Heart right ventricle (tissue), 16 donors: ENCODE measurements at regions of chr2 and their contacts with region 1.

Region 1: DNA sequence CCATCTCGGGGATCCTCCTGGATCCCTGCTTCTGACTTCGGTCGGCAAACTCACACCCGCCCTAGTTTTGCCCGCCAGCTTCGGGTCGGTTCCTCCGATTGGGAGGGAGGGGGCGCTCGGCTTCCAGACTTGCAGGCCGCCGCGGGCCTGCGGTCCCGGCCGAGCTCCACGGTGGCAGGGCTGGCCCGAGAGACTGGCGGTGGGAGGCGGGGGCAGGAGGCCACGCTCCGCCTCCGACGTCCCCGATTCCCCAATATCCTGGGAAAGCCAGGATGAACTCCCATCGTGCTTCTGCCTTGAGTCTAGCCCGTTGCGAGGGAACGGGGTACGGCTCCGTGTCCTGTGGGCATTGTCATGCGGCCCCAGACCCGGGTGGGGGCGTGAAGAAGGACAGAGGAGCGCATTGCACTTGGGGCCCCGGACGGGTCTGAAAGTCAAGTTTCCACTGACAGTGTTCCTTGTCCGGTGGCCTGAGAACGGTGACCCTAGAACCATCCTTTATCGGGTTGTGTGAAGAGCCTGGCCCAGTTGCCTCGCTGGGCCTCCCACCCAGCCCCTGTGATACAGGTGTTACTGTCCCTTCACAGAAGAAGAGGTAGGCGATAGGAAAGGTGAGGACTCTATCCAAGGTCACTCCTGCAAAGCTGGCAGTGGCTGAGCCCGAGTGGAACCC is 2.4 kb upstream of the INHBB start:
- DNase-seq: peak; percentile 78 to 84
- ATAC-seq: peak; percentile 82 to 95 (median 91)
- H3K4me3 ChIP-seq: peak overlapping the region in 9 of 10 donors; percentile 26 to 63 (median 50)
- H3K27ac ChIP-seq: peak overlapping the region in 3 of 10 donors; percentile 56 to 83 (median 65)
- H3K4me1 ChIP-seq: peaks cover 13 to 51% (median 36%) of the 10 kb centered on the region in 9 donors
- H3K27me3 ChIP-seq: peaks cover 12 to 90% (median 72%) of the 10 kb centered on the region in 7 donors
- CTCF ChIP-seq: peak; percentile 70 to 96 (median 85)

Region 2: GRCh38 chr2:120441744-120442471 is 98.3 kb after region 1 on chr2:
- intact Hi-C with region 1: loop called in 1 of 10 experiments (anchors 5 kb)
- DNase-seq: peak in 1 of 2 donors; percentile 37
- ATAC-seq: peak; percentile 36 to 74 (median 54)
- H3K4me3 ChIP-seq: peak overlapping the region; percentile 17 to 56 (median 38)
- H3K27ac ChIP-seq: no peak overlapping the region
- H3K4me1 ChIP-seq: peaks cover 8 to 17% (median 15%) of the 10 kb centered on the region in 9 donors
- H3K27me3 ChIP-seq: peaks cover 0 to 69% (median 51%) of the 10 kb centered on the region in 7 donors
- CTCF ChIP-seq: no peak

Region 3: GRCh38 chr2:120470041-120470965 is 126.7 kb after region 1 on chr2:
- intact Hi-C with region 1: no loop called
- DNase-seq: peak in 1 of 2 donors; percentile 69
- ATAC-seq: peak; percentile 63 to 90 (median 72)
- H3K4me3 ChIP-seq: no peak overlapping the region
- H3K27ac ChIP-seq: peak overlapping the region in 9 of 10 donors; percentile 2 to 59 (median 37)
- H3K4me1 ChIP-seq: peaks cover 5 to 44% (median 34%) of the 10 kb centered on the region in 9 donors
- H3K27me3 ChIP-seq: no peaks in the 10 kb centered on the region
- CTCF ChIP-seq: no peak

Region 4: DNA sequence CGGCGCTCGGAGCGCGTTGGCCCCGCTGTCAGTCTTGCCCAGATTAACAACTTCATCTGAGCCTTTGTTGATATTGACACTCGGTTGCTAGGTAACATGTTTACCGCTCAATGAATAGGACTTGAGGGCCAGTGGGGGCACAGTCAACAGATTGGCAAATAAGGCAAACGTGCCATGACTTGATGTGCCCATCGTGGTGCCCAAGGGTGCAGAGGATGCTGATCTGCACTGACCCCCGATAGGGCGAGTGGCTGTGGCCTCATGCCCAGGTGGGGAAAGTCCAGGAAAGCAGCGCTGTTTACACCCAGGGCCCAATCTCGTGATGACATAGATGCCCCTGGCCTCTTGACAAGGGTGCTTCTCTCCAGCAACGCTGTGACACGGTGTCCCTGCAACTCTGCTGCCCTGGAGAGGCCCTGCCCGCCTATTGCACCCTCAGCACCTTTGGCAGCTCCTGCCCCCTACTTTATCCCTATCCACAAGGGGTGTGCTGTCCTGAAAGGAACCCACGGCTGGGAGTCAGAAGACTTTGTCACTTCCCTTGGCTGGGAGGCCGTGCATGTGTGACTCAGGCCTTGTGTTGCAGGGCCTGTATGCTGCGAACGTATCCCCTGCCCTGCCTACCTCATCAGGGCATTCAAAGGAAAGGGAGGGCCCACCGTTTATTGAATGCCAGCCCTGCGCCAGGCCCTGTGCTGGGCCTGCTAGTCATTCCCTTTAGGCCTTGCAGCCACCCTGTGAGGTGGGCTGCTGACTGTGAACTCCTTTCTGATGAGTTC is 160.4 kb after region 1 on chr2:
- intact Hi-C with region 1: loop called in 2 of 10 experiments (anchors 5 kb)
- DNase-seq: peak; percentile 72 to 73
- ATAC-seq: peak; percentile 66 to 96 (median 90)
- H3K4me3 ChIP-seq: no peak overlapping the region
- H3K27ac ChIP-seq: peak overlapping the region in 9 of 10 donors; percentile 46 to 78 (median 60)
- H3K4me1 ChIP-seq: peaks cover 0 to 21% (median 9%) of the 10 kb centered on the region in 9 donors
- H3K27me3 ChIP-seq: peaks cover 0 to 5% (median 0%) of the 10 kb centered on the region in 7 donors
- CTCF ChIP-seq: peak in 4 of 9 donors; percentile 15 to 50 (median 34)

Region 5: DNA sequence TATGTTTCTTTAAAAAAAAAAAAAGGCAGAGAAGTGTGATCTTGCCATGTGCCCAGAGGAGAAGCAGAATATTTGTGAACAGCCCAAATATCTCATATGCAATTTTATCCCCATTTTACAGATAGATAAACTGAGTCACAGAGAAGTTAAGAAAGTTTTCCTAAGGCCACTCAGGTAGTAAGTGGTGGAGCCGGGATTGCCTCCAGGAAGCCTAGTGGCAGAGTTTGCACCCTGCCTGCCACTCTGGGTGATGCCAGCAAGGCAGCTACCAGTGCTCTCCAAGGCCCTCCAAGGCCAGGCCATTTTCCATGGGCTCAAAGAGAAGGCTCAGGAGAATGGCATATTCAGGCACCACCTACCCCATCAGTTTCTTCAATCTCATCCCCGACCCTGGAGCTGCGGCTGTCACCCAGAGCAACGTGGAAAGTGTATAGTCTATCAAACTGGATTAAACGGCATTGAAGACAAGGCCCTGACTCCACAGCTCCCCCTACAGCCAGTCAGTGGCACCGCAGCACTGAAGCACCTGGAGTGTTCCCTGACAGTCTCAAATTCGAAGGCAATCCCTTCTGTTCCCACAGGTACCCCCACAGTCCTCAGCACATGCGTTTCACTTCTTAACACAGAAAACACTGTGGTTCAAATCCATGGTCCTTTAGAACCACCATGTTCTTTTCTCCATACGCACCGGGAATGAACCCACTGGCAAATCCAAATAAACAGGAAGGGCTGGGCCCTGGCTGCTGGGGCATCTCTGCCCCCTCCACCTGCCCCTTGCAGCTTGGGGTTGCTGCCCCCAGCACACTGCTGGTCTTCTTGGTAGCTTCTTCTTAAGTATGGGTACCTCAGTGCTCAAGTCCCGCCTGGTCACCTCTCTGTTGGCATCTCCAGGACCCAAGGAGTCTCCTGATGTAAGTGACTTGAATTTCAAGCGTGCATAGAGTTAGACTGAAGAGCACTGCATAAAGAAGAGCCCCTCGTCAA is 177.7 kb after region 1 on chr2:
- intact Hi-C with region 1: loop called in 2 of 10 experiments (anchors 10 kb)
- DNase-seq: no peak
- ATAC-seq: peak in 4 of 8 donors; percentile 14 to 60 (median 27)
- H3K4me3 ChIP-seq: no peak overlapping the region
- H3K27ac ChIP-seq: no peak overlapping the region
- H3K4me1 ChIP-seq: peaks cover 12 to 41% (median 30%) of the 10 kb centered on the region in 9 donors
- H3K27me3 ChIP-seq: peaks cover 0 to 34% (median 16%) of the 10 kb centered on the region in 7 donors
- CTCF ChIP-seq: peak; percentile 29 to 81 (median 70)

Region 6: DNA sequence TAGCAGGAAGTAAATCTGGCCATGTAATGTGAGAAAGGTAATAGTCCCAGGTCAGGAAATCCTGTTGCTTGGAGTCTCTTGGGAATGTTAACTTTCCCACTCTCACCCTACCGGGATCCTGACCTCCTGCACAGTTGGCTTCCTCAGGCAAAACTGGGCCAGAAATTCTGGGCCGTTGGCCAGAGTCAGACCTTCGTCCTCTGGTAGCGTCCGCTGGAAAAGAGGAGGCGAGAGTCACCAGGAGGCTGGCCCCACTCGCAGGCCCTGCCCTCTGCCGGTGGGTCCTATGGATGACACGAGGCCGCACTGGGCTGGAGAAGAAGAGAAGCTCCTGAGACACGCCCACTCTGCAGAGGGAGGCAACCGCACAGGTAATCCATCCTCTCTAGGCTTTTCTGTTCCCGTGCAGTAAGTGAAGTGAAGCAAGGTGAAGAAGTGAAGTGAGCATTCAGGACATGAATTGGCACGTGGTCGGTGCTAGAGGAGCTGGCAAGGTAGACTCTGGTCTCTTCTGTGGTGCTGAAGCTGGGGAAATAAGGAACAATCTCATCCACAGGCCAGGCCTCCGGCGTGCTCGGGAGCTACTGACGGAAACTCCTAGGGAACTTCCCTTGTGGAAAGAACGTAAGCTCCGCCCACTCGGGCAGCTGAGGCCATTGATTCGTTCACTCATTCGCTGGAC is 209.4 kb after region 1 on chr2:
- intact Hi-C with region 1: loop called in 8 of 10 experiments (anchors 1 to 10 kb)
- DNase-seq: peak; percentile 90 to 94
- ATAC-seq: peak; percentile 92 to 97 (median 96)
- H3K4me3 ChIP-seq: peak overlapping the region in 2 of 10 donors; percentile 2 to 16
- H3K27ac ChIP-seq: peak overlapping the region in 9 of 10 donors; percentile 36 to 84 (median 64)
- H3K4me1 ChIP-seq: peaks cover 10 to 50% (median 39%) of the 10 kb centered on the region in 9 donors
- H3K27me3 ChIP-seq: peaks cover 0 to 4% (median 0%) of the 10 kb centered on the region in 7 donors
- CTCF ChIP-seq: peak; percentile 73 to 93 (median 84)

Region 7: DNA sequence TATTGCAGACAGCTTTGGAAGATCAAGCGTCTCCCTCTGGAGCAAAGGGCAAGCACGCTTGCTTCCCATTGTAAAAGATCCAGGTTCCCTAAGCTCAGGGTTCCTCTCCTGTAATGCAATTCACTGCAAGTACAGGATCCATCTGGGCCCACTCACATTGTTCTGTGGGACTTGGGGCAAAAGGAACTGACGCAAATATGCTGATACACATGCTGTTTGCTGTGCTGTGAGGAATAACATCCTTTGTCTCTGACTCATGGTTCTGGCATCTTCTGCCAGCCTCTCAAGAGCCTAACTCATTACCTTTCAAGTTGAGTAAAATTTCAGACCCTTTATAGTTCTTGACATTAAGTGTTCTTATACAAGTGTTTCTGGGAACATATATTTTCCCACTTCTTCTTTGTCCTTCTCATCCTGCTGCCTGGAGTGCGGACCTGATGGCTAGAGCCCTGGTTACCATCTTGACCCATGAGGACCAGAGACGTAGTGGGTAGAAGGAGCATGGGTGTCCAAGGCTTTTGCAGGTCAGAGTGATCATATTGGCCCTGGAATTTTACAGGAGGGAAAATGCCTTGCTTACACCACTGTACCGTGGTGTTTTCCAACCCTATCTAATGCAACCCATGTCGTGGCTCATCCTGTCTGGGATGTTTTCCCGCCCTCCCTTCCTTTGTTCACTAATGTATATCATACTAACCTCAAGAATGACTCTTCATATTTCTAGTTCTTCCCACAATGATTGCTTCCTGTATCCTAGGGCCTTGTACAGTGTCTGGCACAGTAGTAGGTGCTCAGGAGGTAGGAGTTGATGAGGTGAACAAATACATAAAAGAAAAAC is 246.4 kb after region 1 on chr2:
- intact Hi-C with region 1: loop called in 1 of 10 experiments (anchors 10 kb)
- DNase-seq: no peak
- ATAC-seq: peak in 4 of 8 donors; percentile 20 to 88 (median 57)
- H3K4me3 ChIP-seq: no peak overlapping the region
- H3K27ac ChIP-seq: peak overlapping the region in 2 of 10 donors; percentile 33 to 41
- H3K4me1 ChIP-seq: peaks cover 0 to 11% (median 4%) of the 10 kb centered on the region in 9 donors
- H3K27me3 ChIP-seq: peaks cover 8 to 39% (median 27%) of the 10 kb centered on the region in 7 donors
- CTCF ChIP-seq: no peak

Region 8: DNA sequence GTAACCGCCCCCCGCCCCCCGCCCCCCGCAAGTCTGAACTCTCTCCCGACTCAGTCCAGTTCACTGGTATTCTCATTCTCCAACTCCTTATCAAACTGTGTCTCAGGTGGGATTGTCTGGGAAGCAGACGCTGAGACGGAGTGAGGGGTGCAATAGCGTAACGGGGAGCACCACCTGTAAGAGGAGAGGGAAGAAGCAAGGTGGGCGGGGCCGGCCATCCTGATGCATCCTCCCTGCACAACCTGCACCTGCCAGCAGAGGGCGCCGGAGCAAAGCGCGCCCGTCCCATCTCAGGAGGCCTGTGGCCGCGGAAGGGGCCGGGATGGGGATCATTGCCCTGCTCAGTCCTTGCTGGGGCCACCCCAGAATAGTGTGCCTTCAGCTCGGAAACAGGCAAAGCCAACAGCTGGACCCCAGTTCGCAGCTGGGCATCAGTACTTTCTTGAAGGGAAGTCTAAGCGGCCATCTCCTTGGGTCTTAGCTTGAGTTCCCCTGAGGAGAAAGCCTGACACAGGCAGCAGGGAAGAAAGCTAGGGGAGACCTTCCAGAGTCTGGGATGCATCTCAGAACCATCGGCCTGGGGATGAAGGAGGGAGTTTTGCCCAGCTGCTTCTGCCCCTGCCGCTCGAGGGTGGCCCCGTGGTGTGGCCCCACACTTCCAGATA is 733.4 kb after region 1 on chr2:
- intact Hi-C with region 1: loop called in 2 of 10 experiments (anchors 10 kb)
- DNase-seq: peak; percentile 34 to 65
- ATAC-seq: peak in 7 of 8 donors; percentile 34 to 65 (median 43)
- H3K4me3 ChIP-seq: no peak overlapping the region
- H3K27ac ChIP-seq: no peak overlapping the region
- H3K4me1 ChIP-seq: peaks cover 0 to 17% (median 0%) of the 10 kb centered on the region in 9 donors
- H3K27me3 ChIP-seq: peaks cover 0 to 55% (median 37%) of the 10 kb centered on the region in 7 donors
- CTCF ChIP-seq: peak; percentile 59 to 94 (median 81)

Region 9: DNA sequence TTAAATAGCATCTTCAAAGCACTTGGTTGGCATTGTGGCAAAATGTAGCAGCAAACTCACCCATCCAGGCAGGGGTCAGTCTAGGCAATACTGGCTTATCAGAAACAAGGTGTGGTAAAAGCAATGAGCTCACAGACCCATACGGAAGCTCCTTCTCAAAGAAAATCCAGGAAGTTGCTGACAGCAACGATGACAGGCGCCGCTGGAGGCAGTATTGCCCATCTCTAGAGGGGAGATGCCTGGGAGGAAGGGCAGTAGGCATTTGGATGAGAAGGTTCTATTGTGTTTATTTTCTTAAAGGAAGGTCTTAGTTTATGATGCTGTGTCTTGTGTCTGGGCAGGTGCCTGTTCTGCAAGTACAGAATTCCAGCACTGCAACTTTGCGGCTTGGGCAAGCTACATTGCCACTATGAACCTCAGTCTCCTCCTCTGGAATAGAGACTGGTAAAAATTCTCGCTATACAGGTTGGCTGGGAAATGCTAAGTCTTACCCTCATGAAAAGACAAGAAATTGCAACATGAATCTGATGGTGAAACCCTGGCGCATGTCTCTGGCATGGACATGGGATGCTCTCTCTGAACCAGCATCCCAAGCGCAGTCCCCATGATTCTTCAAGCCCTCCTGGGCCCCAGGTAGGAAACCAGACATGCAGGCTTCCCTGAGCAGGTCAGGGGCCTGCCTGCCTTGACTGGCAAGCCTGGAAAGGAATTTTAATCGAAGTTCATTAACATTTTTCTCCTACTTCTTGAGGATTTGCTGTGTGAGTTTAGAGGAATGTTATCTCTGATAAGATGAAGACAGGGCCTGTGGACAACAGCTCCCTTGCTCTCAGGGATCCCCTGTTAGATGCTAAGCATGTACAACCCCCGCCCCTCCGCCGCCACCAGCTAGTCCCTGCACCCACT is 785.4 kb after region 1 on chr2:
- intact Hi-C with region 1: no loop called
- DNase-seq: peak; percentile 25 to 33
- ATAC-seq: peak in 3 of 8 donors; percentile 31 to 44 (median 32)
- H3K4me3 ChIP-seq: no peak overlapping the region
- H3K27ac ChIP-seq: no peak overlapping the region
- H3K4me1 ChIP-seq: no peaks in the 10 kb centered on the region
- H3K27me3 ChIP-seq: peaks cover 0 to 4% (median 0%) of the 10 kb centered on the region in 7 donors
- CTCF ChIP-seq: peak; percentile 8 to 61 (median 55)